Mammary epithelial cell (primary cell): ENCODE measurements at regions of chr1 and their contacts with region 1.

Region 1: DNA sequence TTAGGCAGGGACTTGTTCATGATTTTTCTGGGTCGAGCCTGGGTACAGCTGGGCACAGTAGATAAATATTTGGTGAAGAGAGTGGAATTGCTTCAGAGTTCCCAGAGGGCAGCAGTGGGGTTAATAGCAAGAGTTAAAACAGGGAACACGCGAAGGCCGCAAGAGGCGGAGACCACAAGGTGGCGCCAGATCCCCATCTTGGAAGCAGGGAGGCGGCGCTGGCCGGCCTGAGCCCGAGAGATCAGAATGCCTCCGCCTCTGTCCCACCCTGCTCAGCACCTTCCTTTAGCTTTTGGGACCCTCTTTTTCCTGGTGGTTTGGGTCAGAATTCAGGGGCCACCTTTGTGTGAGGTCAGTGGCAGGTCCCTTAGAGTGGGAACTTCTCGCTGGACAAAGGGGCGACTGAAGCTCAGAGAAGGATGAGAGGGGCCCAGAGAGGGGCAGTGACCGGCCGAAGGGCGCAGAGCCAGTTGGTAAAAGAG is 6.5 kb upstream of the PADI2 start:
- DNase-seq: peak; percentile 61
- H3K4me3 ChIP-seq: no peak overlapping the region
- H3K27ac ChIP-seq: no peak overlapping the region
- H3K4me1 ChIP-seq: peaks cover 31% of the 10 kb centered on the region
- H3K27me3 ChIP-seq: no peaks in the 10 kb centered on the region
- CTCF ChIP-seq: peak; percentile 86 to 96

Region 2: GRCh38 chr1:17168091-17168876 is 42.5 kb after region 1 on chr1:
- CTCF ChIA-PET with region 1: no interaction called
- dilution Hi-C with region 1: no loop called
- in situ Hi-C with region 1: no loop called
- intact Hi-C with region 1: loop called (anchors 2 kb)
- DNase-seq: peak; percentile 93
- H3K4me3 ChIP-seq: no peak overlapping the region
- H3K27ac ChIP-seq: peak overlapping the region; percentile 49
- H3K4me1 ChIP-seq: peaks cover 19% of the 10 kb centered on the region
- H3K27me3 ChIP-seq: no peaks in the 10 kb centered on the region
- CTCF ChIP-seq: no peak

Region 3: GRCh38 chr1:17190010-17190995 is 64.5 kb after region 1 on chr1:
- CTCF ChIA-PET with region 1: no interaction called
- dilution Hi-C with region 1: loop called (anchors 5 kb)
- in situ Hi-C with region 1: no loop called
- intact Hi-C with region 1: loop called (anchors 1 kb)
- DNase-seq: peak; percentile 92
- H3K4me3 ChIP-seq: no peak overlapping the region
- H3K27ac ChIP-seq: peak overlapping the region; percentile 64
- H3K4me1 ChIP-seq: peaks cover 61% of the 10 kb centered on the region
- H3K27me3 ChIP-seq: no peaks in the 10 kb centered on the region
- CTCF ChIP-seq: no peak

Region 4: DNA sequence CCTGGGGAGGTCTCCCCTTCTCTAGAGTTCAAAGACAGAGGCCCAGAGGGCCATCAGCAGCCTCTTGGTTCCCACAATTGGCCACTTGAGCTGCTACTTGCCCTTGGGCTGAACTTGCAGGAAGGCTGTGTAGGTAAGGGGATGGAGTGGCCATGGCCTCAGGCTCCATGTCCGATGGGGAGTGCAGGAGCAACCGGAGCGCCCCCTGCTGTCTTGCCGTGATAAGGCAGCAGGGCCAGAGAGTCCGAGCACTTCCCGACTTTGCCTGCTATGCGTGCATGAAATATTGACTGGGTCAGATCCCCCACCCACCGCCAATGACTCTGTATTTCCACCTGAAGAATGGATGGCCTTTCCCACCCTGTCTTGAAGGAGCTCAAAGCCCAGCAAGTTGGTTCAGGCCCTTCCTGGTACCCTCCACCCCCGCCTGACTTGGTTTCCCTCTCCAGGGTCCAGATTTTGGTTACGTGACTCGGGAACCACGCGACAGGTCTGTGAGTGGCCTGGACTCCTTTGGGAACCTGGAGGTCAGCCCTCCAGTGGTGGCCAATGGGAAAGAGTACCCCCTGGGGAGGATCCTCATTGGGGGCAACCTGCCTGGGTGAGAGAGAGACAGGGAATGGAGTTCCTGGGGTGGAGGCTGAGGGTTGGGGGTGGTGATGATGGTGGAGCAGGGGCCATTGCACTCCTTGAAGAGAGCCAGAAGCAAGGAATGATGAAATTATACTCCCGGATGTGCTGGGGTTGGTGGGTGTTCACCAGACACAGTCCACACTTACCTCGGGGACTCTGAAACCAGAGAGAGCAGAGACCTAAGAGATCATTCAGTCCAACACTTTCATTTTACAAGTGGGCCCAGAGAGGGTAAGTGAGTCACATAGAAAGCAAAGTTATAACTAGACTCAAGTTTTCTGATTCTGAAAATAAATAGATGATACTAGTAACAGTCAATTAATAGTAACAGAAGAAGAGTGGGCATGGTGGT is 148.7 kb after region 1 on chr1:
- CTCF ChIA-PET with region 1: no interaction called
- dilution Hi-C with region 1: no loop called
- in situ Hi-C with region 1: no loop called
- intact Hi-C with region 1: loop called (anchors 1 kb)
- DNase-seq: peak; percentile 39
- H3K4me3 ChIP-seq: no peak overlapping the region
- H3K27ac ChIP-seq: no peak overlapping the region
- H3K4me1 ChIP-seq: peaks cover 10% of the 10 kb centered on the region
- H3K27me3 ChIP-seq: no peaks in the 10 kb centered on the region
- CTCF ChIP-seq: peak; percentile 63 to 77

Region 5: GRCh38 chr1:17370618-17371017 is 244.8 kb after region 1 on chr1:
- CTCF ChIA-PET with region 1: no interaction called
- dilution Hi-C with region 1: loop called (anchors 5 kb)
- in situ Hi-C with region 1: no loop called
- intact Hi-C with region 1: loop called (anchors 1 kb)
- DNase-seq: peak; percentile 32
- H3K4me3 ChIP-seq: no peak overlapping the region
- H3K27ac ChIP-seq: no peak overlapping the region
- H3K4me1 ChIP-seq: peaks cover 32% of the 10 kb centered on the region
- H3K27me3 ChIP-seq: no peaks in the 10 kb centered on the region
- CTCF ChIP-seq: peak; percentile 72

Region 6: GRCh38 chr1:17405898-17406759 is 280.3 kb after region 1 on chr1:
- CTCF ChIA-PET with region 1: no interaction called
- dilution Hi-C with region 1: no loop called
- in situ Hi-C with region 1: loop called (anchors 5 to 10 kb)
- intact Hi-C with region 1: loop called (anchors 1 kb)
- DNase-seq: peak; percentile 32
- H3K4me3 ChIP-seq: no peak overlapping the region
- H3K27ac ChIP-seq: no peak overlapping the region
- H3K4me1 ChIP-seq: peaks cover 19% of the 10 kb centered on the region
- H3K27me3 ChIP-seq: no peaks in the 10 kb centered on the region
- CTCF ChIP-seq: peak; percentile 79 to 83